Left colon (tissue), 2 donors: ENCODE measurements at regions of chr3 and their contacts with region 1.

Region 1: GRCh38 chr3:102229062-102229655 is 205.7 kb upstream of the ZPLD1 start:
- DNase-seq: peak; percentile 39 to 76
- ATAC-seq: peak; percentile 73

Region 2: DNA sequence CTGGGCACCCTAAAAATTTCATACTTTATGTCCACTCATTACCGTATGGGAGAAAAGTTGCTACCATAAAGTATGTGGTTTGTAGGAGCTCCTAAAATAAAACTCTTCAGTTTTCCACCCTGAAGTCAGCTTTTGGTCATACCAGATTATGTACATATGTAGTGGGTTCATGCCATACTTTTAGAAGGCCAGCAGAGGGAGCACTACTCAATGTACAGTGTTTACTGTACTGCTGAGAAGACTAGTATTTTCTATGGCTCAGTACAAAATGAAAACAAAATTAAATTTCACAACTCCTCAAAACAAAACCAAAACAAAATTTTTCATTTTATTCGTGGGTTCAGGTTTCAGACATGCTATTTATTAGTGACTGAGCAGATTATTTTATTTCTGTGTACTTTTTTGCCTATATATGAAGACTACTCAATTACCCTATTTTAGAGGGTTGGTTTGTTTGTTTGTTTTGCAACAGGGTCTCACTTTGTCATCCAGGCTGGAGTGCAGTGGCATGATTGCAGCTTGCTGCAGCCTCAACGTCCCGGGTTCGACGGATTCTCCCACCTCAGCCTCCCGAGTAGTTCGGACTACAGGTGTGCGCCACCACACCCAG is 425.9 kb before region 1 on chr3:
- intact Hi-C with region 1: loop called (anchors 2 to 10 kb)
- DNase-seq: peak in 1 of 2 donors; percentile 26
- ATAC-seq: peak; percentile 96

Region 3: DNA sequence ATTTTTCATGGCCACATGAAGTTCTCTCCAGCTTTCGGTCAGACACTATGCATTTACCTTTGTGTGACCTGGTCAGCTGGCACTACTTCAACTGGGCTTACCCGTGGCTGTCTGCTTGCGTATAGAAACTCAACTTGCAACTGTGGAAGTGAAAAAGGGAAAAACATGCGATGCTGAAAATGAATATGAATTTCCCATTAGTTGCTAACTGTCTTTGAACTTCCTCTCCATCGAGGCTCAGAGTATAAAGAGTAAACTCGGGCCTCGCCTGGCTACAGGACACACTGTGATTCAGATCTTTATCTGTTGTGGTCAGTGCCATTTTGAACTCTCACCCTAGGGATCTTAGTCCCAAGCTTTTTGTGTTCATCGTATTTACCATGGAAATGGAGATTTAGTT is 353.0 kb before region 1 on chr3:
- intact Hi-C with region 1: no loop called
- DNase-seq: no peak
- ATAC-seq: no peak